MCF 10A (cell line): ENCODE measurements at regions of chr1 and their contacts with region 1.

Region 1: GRCh38 chr1:224300314-224300713 is 29.7 kb downstream of the NVL start:
- DNase-seq: peak; percentile 90
- H3K4me3 Mint-ChIP-seq: no peak overlapping the region
- H3K27ac Mint-ChIP-seq: peak overlapping the region; percentile 65
- H3K4me1 Mint-ChIP-seq: peaks cover 6% of the 10 kb centered on the region
- H3K27me3 Mint-ChIP-seq: no peaks in the 10 kb centered on the region
- CTCF ChIP-seq: no peak

Region 2: DNA sequence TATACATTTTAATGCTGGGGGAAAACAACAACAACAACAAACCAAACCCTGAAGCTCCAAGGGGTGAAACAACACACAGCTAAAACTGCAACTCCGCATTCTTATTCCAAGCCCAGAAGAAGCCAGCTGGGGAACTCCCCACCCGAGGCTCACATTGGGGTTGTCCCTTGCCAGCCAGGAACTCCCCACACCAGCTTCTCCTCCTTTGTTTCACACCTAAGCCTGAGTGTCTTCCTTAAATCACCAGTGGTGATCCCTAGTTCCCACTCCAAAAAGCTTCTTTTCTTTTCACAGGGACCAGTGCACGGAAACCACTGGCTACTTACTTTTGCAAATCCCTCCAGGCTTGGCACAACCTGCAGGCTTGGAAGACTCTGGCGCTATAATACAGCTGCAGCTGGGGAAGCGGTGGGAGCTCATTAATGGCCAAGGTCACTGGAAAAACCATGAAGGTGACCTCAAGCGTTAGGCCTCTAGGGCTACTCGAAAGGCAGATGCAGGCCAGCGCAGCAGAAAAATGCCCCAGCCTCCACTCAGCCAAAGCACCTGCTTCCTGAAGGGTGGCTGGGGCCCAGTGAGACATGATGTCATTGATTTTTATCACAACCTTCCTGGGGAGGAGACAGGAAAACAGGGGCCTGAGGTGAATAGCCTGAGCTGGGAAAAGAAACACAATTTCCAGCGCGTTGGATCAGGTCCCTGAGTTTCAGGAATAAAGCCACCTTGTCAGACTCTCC is 1197.3 kb before region 1 on chr1:
- CTCF ChIA-PET with region 1: no interaction called
- POLR2A ChIA-PET with region 1: no interaction called
- intact Hi-C with region 1: no loop called
- DNase-seq: no peak
- H3K4me3 Mint-ChIP-seq: no peak overlapping the region
- H3K27ac Mint-ChIP-seq: no peak overlapping the region
- H3K4me1 Mint-ChIP-seq: no peaks in the 10 kb centered on the region
- H3K27me3 Mint-ChIP-seq: no peaks in the 10 kb centered on the region
- CTCF ChIP-seq: no peak

Region 3: DNA sequence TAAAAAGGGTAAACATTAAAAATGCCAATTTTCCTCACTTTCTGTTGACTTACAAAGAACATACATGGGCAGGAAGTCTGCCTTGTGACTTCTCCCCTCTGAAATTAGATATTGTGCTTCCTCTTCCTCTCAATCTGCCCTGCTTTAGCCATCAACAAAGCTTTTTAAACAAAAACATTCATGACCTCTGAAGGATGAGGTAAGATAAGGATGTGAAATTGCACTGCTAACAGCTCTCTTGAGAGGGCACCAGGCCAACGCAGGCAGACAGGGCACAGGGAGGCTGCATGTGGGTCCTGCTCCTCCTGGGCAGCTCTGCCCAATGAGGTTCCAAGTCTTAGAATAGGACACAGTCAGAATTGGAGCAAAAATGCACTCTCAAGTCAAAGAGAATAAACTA is 55.1 kb before region 1 on chr1:
- CTCF ChIA-PET with region 1: no interaction called
- POLR2A ChIA-PET with region 1: no interaction called
- intact Hi-C with region 1: no loop called
- DNase-seq: no peak
- H3K4me3 Mint-ChIP-seq: no peak overlapping the region
- H3K27ac Mint-ChIP-seq: no peak overlapping the region
- H3K4me1 Mint-ChIP-seq: no peaks in the 10 kb centered on the region
- H3K27me3 Mint-ChIP-seq: no peaks in the 10 kb centered on the region
- CTCF ChIP-seq: no peak

Region 4: DNA sequence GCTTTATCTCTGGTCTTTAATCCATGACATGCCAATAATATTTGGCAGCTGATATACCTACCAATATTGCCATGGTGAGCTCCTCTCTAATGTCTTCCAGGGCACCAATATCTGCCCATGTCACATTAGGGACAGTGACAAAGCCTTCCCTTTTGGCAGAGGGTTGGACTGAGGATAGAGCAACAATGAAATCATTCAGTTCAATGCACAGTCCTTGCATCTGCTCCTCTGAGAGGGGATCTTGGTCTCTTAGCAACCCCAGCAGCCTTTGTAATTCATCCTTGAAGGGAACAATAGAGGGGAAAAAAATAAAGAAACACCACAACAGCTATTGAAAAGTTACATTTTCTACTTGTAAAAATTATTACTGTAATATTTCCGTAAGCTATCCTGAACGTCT is 12.6 kb before region 1 on chr1:
- CTCF ChIA-PET with region 1: interaction called, 3 read pairs
- POLR2A ChIA-PET with region 1: interaction called, 10 read pairs
- intact Hi-C with region 1: no loop called
- DNase-seq: no peak
- H3K4me3 Mint-ChIP-seq: no peak overlapping the region
- H3K27ac Mint-ChIP-seq: no peak overlapping the region
- H3K4me1 Mint-ChIP-seq: no peaks in the 10 kb centered on the region
- H3K27me3 Mint-ChIP-seq: no peaks in the 10 kb centered on the region
- CTCF ChIP-seq: no peak

Region 5: GRCh38 chr1:224317383-224318024 is 17.2 kb after region 1 on chr1:
- CTCF ChIA-PET with region 1: interaction called, 4 read pairs
- POLR2A ChIA-PET with region 1: interaction called, 10 read pairs
- intact Hi-C with region 1: no loop called
- DNase-seq: no peak
- H3K4me3 Mint-ChIP-seq: no peak overlapping the region
- H3K27ac Mint-ChIP-seq: no peak overlapping the region
- H3K4me1 Mint-ChIP-seq: no peaks in the 10 kb centered on the region
- H3K27me3 Mint-ChIP-seq: no peaks in the 10 kb centered on the region
- CTCF ChIP-seq: no peak